ENCODE measurements at regions of chr11 and their contacts with region 1.

Region 1: DNA sequence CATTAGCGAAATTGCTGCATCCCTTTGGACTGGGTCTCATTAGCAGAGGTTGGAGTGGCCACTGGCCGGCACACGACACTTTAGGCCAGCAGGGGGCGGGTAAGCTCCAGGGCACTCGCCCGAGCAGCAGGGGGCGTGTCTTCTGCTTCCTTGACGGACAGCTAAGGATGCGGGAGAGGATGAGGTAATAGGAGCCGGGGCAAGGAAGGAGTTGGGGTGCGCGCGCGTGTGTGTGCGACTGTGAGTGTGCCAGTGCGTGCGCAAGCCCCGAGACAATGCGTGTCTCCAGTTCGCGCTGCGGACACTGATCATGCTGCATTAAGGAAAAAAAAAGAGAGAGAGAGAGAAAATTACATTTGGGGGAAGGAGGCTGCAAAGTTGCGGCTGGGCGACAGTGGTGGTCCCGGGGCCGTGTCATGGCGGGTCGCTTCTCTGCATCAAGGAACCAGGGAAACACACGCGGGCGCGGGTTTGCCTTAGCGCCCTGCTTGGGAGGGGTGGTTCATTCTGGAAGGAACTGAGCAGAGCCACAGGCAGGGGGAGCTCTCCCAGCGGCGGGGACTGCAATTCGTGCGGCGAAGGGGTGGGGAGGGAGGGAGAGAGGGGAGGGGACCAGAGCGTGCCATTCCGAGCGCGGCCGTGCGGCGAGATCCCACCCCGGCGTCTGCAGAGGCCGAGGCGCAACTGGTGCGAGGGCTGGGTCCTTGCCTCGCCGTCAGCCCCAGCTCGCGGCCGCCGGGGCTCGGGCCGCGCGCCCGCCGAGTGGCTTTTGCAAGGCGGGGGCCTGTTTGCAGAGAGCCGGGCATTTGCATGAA is at the start of gene DTX4:
- DNase-seq: peak; percentile 78 to 92 (median 89)
- ATAC-seq: peak; percentile 86
- H3K4me3 ChIP-seq: peak within 1 kb of the TSS; percentile 72 to 85
- H3K4me3 Mint-ChIP-seq: peak within 1 kb of the TSS; percentile 87
- H3K27ac ChIP-seq: peak within 1 kb of the TSS in 1 of 2 experiments; percentile 33
- H3K27ac Mint-ChIP-seq: no peak within 1 kb of the TSS
- H3K4me1 ChIP-seq: peaks cover 9% of the 10 kb centered on the region
- H3K4me1 Mint-ChIP-seq: peaks cover 11% of the 10 kb centered on the region
- H3K27me3 ChIP-seq: peaks cover 0 to 5% of the 10 kb centered on the region in 2 experiments
- H3K27me3 Mint-ChIP-seq: peaks cover 6% of the 10 kb centered on the region
- CTCF ChIP-seq: peak; percentile 95
- total RNA-seq, gene DTX4: 0.68 to 0.97 TPM

Region 2: DNA sequence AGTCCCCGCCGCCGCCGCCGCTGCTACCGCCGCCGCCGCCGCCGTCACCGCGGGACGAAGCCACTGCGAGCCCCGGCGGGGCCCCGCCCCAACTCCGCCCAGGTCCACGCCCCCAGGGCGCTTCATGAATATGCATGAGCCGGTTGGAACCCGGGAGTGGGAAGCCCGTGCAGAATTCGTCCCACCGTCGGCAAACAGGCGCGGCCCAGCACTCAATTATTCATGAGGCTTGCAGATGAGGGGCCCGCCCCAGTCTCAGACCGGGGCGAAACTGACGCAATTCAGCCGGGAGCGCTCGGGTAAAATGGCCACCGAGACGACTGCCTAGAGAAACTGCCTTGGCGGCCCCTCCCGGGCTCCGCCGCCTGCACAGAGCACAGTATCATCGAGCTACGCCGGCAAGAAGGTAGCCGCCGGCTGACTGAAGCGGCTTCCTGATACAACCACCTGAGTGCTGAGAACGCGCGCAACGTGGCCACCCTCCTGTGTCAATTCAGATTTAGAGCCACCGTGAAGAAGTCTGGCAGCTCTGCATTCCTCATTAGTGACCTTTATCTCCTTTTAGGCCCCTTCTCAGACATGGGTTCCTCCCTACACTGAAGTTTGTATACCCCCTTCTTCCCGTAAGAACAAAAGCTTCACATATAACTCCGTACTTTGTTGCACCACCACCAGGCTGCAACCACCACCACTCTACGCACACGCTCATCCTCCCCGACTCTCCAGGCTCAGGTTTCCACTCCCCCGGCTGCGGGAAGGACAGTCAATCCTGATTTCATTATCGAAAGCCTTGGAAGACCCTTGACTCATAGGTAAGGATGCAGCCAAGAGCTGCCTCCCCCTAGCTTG is 1846.6 kb before region 1 on chr11 and contains the start of gene TNKS1BP1:
- CTCF ChIA-PET with region 1: no interaction called
- POLR2A ChIA-PET with region 1: no interaction called
- intact Hi-C with region 1: loop called in 1 of 2 experiments (anchors 1 kb)
- DNase-seq: peak; percentile 74 to 93 (median 88)
- ATAC-seq: peak; percentile 88
- H3K4me3 ChIP-seq: peak within 1 kb of the TSS; percentile 75 to 98
- H3K4me3 Mint-ChIP-seq: peak within 1 kb of the TSS; percentile 87
- H3K27ac ChIP-seq: peak within 1 kb of the TSS; percentile 80 to 81
- H3K27ac Mint-ChIP-seq: peak within 1 kb of the TSS; percentile 96
- H3K4me1 ChIP-seq: peaks cover 29% of the 10 kb centered on the region
- H3K4me1 Mint-ChIP-seq: peaks cover 34% of the 10 kb centered on the region
- H3K27me3 ChIP-seq: no peaks in the 10 kb centered on the region
- H3K27me3 Mint-ChIP-seq: no peaks in the 10 kb centered on the region
- CTCF ChIP-seq: no peak
- total RNA-seq, gene TNKS1BP1: 13.5 to 14.0 TPM

Region 3: DNA sequence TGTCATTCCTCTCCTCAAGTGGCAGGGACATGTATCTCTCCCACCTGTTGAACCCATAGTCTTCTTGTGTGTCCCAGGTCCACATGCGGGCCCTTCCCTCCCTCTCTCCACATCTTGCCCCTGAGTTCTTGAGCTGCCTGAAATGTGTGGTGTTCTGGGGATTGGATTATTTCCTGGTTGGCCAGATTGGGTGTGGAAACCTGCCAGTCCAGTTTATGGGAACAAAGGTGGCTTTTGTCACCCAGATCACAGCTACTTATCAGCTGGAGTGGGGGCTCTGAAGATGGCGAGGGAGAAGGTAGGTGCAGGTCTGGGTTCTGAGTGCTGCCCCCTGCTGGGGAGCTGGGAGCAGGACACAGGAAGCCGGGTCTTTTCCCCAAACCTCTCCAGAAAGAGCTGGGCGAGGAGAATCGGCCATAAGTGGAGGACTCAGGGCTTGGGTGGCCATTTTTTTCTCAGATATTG is 14.4 kb after region 1 on chr11:
- CTCF ChIA-PET with region 1: interaction called, 102 read pairs
- POLR2A ChIA-PET with region 1: interaction called, 7 read pairs
- intact Hi-C with region 1: loop called (anchors 1 kb)
- DNase-seq: peak in 8 of 9 experiments; percentile 19 to 68 (median 56)
- ATAC-seq: peak; percentile 78
- H3K4me3 ChIP-seq: no peak overlapping the region
- H3K4me3 Mint-ChIP-seq: no peak overlapping the region
- H3K27ac ChIP-seq: no peak overlapping the region
- H3K27ac Mint-ChIP-seq: no peak overlapping the region
- H3K4me1 ChIP-seq: no peaks in the 10 kb centered on the region
- H3K4me1 Mint-ChIP-seq: peaks cover 2% of the 10 kb centered on the region
- H3K27me3 ChIP-seq: no peaks in the 10 kb centered on the region
- H3K27me3 Mint-ChIP-seq: peaks cover 3% of the 10 kb centered on the region
- CTCF ChIP-seq: peak; percentile 65

Region 4: DNA sequence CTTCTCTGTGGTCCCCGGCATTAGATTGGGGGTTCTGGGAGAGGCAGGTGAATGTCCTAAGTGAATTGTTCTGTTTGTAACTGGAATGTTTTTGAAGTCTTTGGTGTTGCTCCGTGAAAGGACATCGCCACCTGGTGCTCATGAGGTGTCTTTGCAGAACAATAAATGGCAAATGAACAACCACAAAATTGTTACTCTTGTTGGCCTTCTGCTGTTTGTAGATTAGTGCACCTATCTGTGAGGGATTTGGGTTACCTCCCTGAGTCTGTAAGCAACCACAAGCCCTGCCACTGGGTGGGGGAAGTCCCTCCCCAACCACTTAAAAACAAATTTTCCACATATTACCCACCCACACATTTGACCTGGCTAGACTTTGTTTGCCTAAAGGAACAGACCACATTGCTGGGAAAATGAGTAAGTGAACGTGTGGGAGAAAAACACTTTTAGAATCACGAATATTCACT is 36.3 kb after region 1 on chr11:
- CTCF ChIA-PET with region 1: interaction called, 25 read pairs
- POLR2A ChIA-PET with region 1: interaction called, 3 read pairs
- intact Hi-C with region 1: loop called (anchors 1 kb)
- DNase-seq: peak in 8 of 9 experiments; percentile 9 to 72 (median 34)
- ATAC-seq: peak; percentile 69
- H3K4me3 ChIP-seq: no peak overlapping the region
- H3K4me3 Mint-ChIP-seq: peak overlapping the region; percentile 19
- H3K27ac ChIP-seq: no peak overlapping the region
- H3K27ac Mint-ChIP-seq: no peak overlapping the region
- H3K4me1 ChIP-seq: peaks cover 15% of the 10 kb centered on the region
- H3K4me1 Mint-ChIP-seq: peaks cover 16% of the 10 kb centered on the region
- H3K27me3 ChIP-seq: peaks cover 0 to 3% of the 10 kb centered on the region in 2 experiments
- H3K27me3 Mint-ChIP-seq: peaks cover 5% of the 10 kb centered on the region
- CTCF ChIP-seq: peak; percentile 49

Region 5: GRCh38 chr11:59263225-59263894 is 91.6 kb after region 1 on chr11:
- CTCF ChIA-PET with region 1: no interaction called
- POLR2A ChIA-PET with region 1: no interaction called
- intact Hi-C with region 1: no loop called
- DNase-seq: peak in 2 of 9 experiments; percentile 12 to 30
- ATAC-seq: no peak
- H3K4me3 ChIP-seq: no peak overlapping the region
- H3K4me3 Mint-ChIP-seq: no peak overlapping the region
- H3K27ac ChIP-seq: no peak overlapping the region
- H3K27ac Mint-ChIP-seq: no peak overlapping the region
- H3K4me1 ChIP-seq: no peaks in the 10 kb centered on the region
- H3K4me1 Mint-ChIP-seq: no peaks in the 10 kb centered on the region
- H3K27me3 ChIP-seq: no peaks in the 10 kb centered on the region
- H3K27me3 Mint-ChIP-seq: peaks cover 2% of the 10 kb centered on the region
- CTCF ChIP-seq: no peak

Region 6: GRCh38 chr11:59560702-59561469 is 389.2 kb after region 1 on chr11:
- CTCF ChIA-PET with region 1: no interaction called
- POLR2A ChIA-PET with region 1: no interaction called
- intact Hi-C with region 1: loop called in 1 of 2 experiments (anchors 5 kb)
- DNase-seq: peak; percentile 64 to 91 (median 82)
- ATAC-seq: peak; percentile 74
- H3K4me3 ChIP-seq: peak overlapping the region; percentile 73 to 80
- H3K4me3 Mint-ChIP-seq: peak overlapping the region; percentile 96
- H3K27ac ChIP-seq: peak overlapping the region; percentile 53 to 60
- H3K27ac Mint-ChIP-seq: peak overlapping the region; percentile 94
- H3K4me1 ChIP-seq: peaks cover 20% of the 10 kb centered on the region
- H3K4me1 Mint-ChIP-seq: peaks cover 35% of the 10 kb centered on the region
- H3K27me3 ChIP-seq: no peaks in the 10 kb centered on the region
- H3K27me3 Mint-ChIP-seq: no peaks in the 10 kb centered on the region
- CTCF ChIP-seq: no peak

Region 7: DNA sequence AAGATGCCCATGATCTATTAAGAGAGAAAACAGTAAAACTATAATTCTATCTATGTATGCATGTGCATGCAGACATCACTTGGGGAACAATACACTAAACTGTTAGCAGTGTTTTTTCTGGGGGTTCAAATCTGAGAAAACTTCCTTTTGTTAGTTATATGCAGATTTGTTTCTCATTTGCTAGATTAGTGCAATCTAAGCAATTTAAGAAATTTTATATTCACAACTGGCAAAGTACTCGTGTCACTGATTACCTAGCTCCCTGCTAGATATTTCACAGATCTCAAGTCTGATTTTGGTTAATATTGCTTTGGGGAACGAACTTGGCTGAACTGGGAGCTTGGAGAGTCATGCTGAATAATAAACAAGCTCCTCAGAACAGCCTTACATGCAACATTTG is 458.8 kb after region 1 on chr11:
- CTCF ChIA-PET with region 1: no interaction called
- POLR2A ChIA-PET with region 1: no interaction called
- intact Hi-C with region 1: no loop called
- DNase-seq: no peak
- ATAC-seq: no peak
- H3K4me3 ChIP-seq: no peak overlapping the region
- H3K4me3 Mint-ChIP-seq: no peak overlapping the region
- H3K27ac ChIP-seq: no peak overlapping the region
- H3K27ac Mint-ChIP-seq: no peak overlapping the region
- H3K4me1 ChIP-seq: no peaks in the 10 kb centered on the region
- H3K4me1 Mint-ChIP-seq: no peaks in the 10 kb centered on the region
- H3K27me3 ChIP-seq: no peaks in the 10 kb centered on the region
- H3K27me3 Mint-ChIP-seq: no peaks in the 10 kb centered on the region
- CTCF ChIP-seq: no peak

Region 8: GRCh38 chr11:59802639-59803176 is 631.0 kb after region 1 on chr11:
- CTCF ChIA-PET with region 1: no interaction called
- POLR2A ChIA-PET with region 1: no interaction called
- intact Hi-C with region 1: loop called in 1 of 2 experiments (anchors 10 kb)
- DNase-seq: peak in 6 of 9 experiments; percentile 26 to 78 (median 42)
- ATAC-seq: peak; percentile 70
- H3K4me3 ChIP-seq: no peak overlapping the region
- H3K4me3 Mint-ChIP-seq: no peak overlapping the region
- H3K27ac ChIP-seq: no peak overlapping the region
- H3K27ac Mint-ChIP-seq: no peak overlapping the region
- H3K4me1 ChIP-seq: no peaks in the 10 kb centered on the region
- H3K4me1 Mint-ChIP-seq: no peaks in the 10 kb centered on the region
- H3K27me3 ChIP-seq: no peaks in the 10 kb centered on the region
- H3K27me3 Mint-ChIP-seq: no peaks in the 10 kb centered on the region
- CTCF ChIP-seq: peak; percentile 72